Activated CD8-positive, alpha-beta memory T cell treated with anti-CD3 and anti-CD28 coated beads, Interleukin-2, amount 10 ng/mL, durations not matched to agents 7 days and 5 days (primary cell): ENCODE measurements at regions of chr11 and their contacts with region 1.

Region 1: DNA sequence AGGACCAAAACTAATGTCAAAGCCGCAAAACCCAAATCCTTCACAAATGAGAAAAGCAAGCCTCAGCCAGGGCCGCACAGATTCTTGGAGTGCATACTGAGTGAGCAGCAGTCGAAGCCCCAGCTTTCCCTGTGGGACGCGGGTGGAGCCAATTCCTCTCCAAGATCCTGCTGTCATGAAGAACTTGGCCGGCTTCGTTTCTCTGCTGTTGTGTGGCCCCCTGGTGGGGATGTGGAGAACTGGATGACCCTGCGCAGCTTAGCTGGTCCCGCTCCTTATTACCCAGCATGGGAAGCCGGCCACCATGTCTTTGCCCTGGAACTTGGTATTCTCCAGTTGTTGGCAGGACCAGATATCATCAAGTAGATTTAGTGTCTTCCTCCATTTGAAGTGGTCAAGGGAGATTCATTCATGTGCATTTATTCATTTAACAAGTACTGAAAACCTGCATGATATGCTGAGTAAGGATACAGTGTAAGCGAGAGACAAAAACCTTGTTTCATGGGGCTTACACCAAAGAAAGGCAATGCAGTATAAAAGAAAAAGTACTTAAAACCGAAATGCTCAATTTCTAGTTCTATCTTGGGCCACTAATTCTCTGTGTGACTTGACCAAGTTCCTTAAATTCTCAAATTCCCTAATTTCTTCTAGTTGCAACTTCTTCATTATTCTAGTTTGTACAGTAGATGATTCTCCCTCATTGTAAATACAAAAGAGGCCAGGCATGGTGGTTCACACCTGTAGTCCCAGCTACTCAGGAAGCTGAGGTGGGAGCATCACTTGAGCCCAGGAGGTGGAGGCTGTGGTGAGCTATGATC is 56.7 kb upstream of the CRTAM start:
- DNase-seq: peak; percentile 82
- ATAC-seq: peak; percentile 87
- H3K4me3 Mint-ChIP-seq: no peak overlapping the region
- H3K27ac Mint-ChIP-seq: no peak overlapping the region
- H3K4me1 Mint-ChIP-seq: peaks cover 20% of the 10 kb centered on the region
- H3K27me3 Mint-ChIP-seq: no peaks in the 10 kb centered on the region

Region 2: GRCh38 chr11:122628810-122629555 is 152.6 kb before region 1 on chr11:
- CTCF ChIA-PET with region 1: interaction called, 142 read pairs
- DNase-seq: peak; percentile 81
- ATAC-seq: peak; percentile 88
- H3K4me3 Mint-ChIP-seq: no peak overlapping the region
- H3K27ac Mint-ChIP-seq: no peak overlapping the region
- H3K4me1 Mint-ChIP-seq: peaks cover 15% of the 10 kb centered on the region
- H3K27me3 Mint-ChIP-seq: peaks cover 7% of the 10 kb centered on the region

Region 3: GRCh38 chr11:122637541-122637940 is 144.0 kb before region 1 on chr11:
- CTCF ChIA-PET with region 1: interaction called, 142 read pairs
- DNase-seq: peak; percentile 49
- ATAC-seq: peak; percentile 55
- H3K4me3 Mint-ChIP-seq: no peak overlapping the region
- H3K27ac Mint-ChIP-seq: no peak overlapping the region
- H3K4me1 Mint-ChIP-seq: peaks cover 19% of the 10 kb centered on the region
- H3K27me3 Mint-ChIP-seq: peaks cover 10% of the 10 kb centered on the region

Region 4: GRCh38 chr11:122727101-122727929 is 54.3 kb before region 1 on chr11:
- CTCF ChIA-PET with region 1: no interaction called
- DNase-seq: peak; percentile 76
- ATAC-seq: peak; percentile 77
- H3K4me3 Mint-ChIP-seq: peak overlapping the region; percentile 65
- H3K27ac Mint-ChIP-seq: peak overlapping the region; percentile 96
- H3K4me1 Mint-ChIP-seq: peaks cover 82% of the 10 kb centered on the region
- H3K27me3 Mint-ChIP-seq: no peaks in the 10 kb centered on the region

Region 5: GRCh38 chr11:122843281-122844141 is 61.9 kb after region 1 on chr11:
- CTCF ChIA-PET with region 1: no interaction called
- DNase-seq: peak; percentile 88
- ATAC-seq: peak; percentile 77
- H3K4me3 Mint-ChIP-seq: peak overlapping the region; percentile 62
- H3K27ac Mint-ChIP-seq: peak overlapping the region; percentile 97
- H3K4me1 Mint-ChIP-seq: peaks cover 79% of the 10 kb centered on the region
- H3K27me3 Mint-ChIP-seq: no peaks in the 10 kb centered on the region

Region 6: GRCh38 chr11:122963961-122964360 is 182.4 kb after region 1 on chr11:
- CTCF ChIA-PET with region 1: no interaction called
- DNase-seq: no peak
- ATAC-seq: no peak
- H3K4me3 Mint-ChIP-seq: no peak overlapping the region
- H3K27ac Mint-ChIP-seq: no peak overlapping the region
- H3K4me1 Mint-ChIP-seq: no peaks in the 10 kb centered on the region
- H3K27me3 Mint-ChIP-seq: peaks cover 42% of the 10 kb centered on the region